B cell (primary cell): ENCODE measurements at regions of chr6 and their contacts with region 1.

Region 1: GRCh38 chr6:123316733-123317323 is 319.9 kb downstream of the TRDN start:
- DNase-seq: peak; percentile 3
- ATAC-seq: no peak
- H3K4me3 ChIP-seq: no peak overlapping the region
- H3K4me3 Mint-ChIP-seq: no peak overlapping the region
- H3K27ac ChIP-seq: no peak overlapping the region
- H3K27ac Mint-ChIP-seq: no peak overlapping the region
- H3K4me1 ChIP-seq: no peaks in the 10 kb centered on the region
- H3K4me1 Mint-ChIP-seq: no peaks in the 10 kb centered on the region
- H3K27me3 ChIP-seq: no peaks in the 10 kb centered on the region
- H3K27me3 Mint-ChIP-seq: no peaks in the 10 kb centered on the region
- CTCF ChIP-seq: peak; percentile 83

Region 2: DNA sequence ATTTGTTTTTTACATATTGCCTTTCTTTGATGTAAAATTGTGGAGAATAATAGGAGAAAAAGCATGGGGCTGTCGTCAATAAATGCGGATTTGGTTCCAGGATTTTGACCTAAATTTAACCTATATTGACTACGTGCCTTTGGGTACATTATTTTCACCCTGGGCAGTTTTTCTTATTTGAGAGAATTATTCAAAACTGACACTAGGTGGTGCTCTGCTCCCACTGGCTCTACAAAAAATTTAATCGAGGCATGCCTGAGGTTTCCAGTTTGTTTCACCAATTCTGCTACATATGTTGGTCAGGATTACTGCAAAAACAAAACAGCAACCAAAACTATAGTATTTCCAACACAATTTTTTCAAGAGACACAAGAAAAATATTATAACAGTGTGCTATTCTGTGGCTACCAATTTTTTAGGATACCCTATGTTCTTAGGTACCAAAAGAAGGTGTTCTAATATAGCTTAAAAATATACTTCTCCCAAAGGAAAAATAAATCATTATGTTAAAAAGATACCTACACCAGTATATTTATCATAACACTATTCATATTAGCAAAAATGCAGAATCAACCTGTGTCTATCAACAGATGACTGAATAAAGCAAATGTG is 585.9 kb before region 1 on chr6:
- CTCF ChIA-PET with region 1: interaction called, 21 read pairs
- POLR2A ChIA-PET with region 1: no interaction called
- intact Hi-C with region 1: loop called (anchors 1 kb)
- DNase-seq: peak; percentile 30
- ATAC-seq: no peak
- H3K4me3 ChIP-seq: no peak overlapping the region
- H3K4me3 Mint-ChIP-seq: no peak overlapping the region
- H3K27ac ChIP-seq: no peak overlapping the region
- H3K27ac Mint-ChIP-seq: no peak overlapping the region
- H3K4me1 ChIP-seq: no peaks in the 10 kb centered on the region
- H3K4me1 Mint-ChIP-seq: no peaks in the 10 kb centered on the region
- H3K27me3 ChIP-seq: peaks cover 0 to 4% (median 0%) of the 10 kb centered on the region in 4 experiments
- H3K27me3 Mint-ChIP-seq: peaks cover 5% of the 10 kb centered on the region
- CTCF ChIP-seq: peak; percentile 85

Region 3: GRCh38 chr6:123226398-123226797 is 90.4 kb before region 1 on chr6:
- CTCF ChIA-PET with region 1: no interaction called
- POLR2A ChIA-PET with region 1: no interaction called
- intact Hi-C with region 1: no loop called
- DNase-seq: no peak
- ATAC-seq: no peak
- H3K4me3 ChIP-seq: no peak overlapping the region
- H3K4me3 Mint-ChIP-seq: no peak overlapping the region
- H3K27ac ChIP-seq: no peak overlapping the region
- H3K27ac Mint-ChIP-seq: no peak overlapping the region
- H3K4me1 ChIP-seq: no peaks in the 10 kb centered on the region
- H3K4me1 Mint-ChIP-seq: no peaks in the 10 kb centered on the region
- H3K27me3 ChIP-seq: no peaks in the 10 kb centered on the region
- H3K27me3 Mint-ChIP-seq: no peaks in the 10 kb centered on the region
- CTCF ChIP-seq: no peak

Region 4: GRCh38 chr6:123343836-123344235 is 27.0 kb after region 1 on chr6:
- CTCF ChIA-PET with region 1: no interaction called
- POLR2A ChIA-PET with region 1: no interaction called
- intact Hi-C with region 1: no loop called
- DNase-seq: no peak
- ATAC-seq: no peak
- H3K4me3 ChIP-seq: no peak overlapping the region
- H3K4me3 Mint-ChIP-seq: no peak overlapping the region
- H3K27ac ChIP-seq: no peak overlapping the region
- H3K27ac Mint-ChIP-seq: no peak overlapping the region
- H3K4me1 ChIP-seq: no peaks in the 10 kb centered on the region
- H3K4me1 Mint-ChIP-seq: no peaks in the 10 kb centered on the region
- H3K27me3 ChIP-seq: no peaks in the 10 kb centered on the region
- H3K27me3 Mint-ChIP-seq: no peaks in the 10 kb centered on the region
- CTCF ChIP-seq: no peak